IMR-90 (cell line): ENCODE measurements at regions of chr12 and their contacts with region 1.

Region 1: DNA sequence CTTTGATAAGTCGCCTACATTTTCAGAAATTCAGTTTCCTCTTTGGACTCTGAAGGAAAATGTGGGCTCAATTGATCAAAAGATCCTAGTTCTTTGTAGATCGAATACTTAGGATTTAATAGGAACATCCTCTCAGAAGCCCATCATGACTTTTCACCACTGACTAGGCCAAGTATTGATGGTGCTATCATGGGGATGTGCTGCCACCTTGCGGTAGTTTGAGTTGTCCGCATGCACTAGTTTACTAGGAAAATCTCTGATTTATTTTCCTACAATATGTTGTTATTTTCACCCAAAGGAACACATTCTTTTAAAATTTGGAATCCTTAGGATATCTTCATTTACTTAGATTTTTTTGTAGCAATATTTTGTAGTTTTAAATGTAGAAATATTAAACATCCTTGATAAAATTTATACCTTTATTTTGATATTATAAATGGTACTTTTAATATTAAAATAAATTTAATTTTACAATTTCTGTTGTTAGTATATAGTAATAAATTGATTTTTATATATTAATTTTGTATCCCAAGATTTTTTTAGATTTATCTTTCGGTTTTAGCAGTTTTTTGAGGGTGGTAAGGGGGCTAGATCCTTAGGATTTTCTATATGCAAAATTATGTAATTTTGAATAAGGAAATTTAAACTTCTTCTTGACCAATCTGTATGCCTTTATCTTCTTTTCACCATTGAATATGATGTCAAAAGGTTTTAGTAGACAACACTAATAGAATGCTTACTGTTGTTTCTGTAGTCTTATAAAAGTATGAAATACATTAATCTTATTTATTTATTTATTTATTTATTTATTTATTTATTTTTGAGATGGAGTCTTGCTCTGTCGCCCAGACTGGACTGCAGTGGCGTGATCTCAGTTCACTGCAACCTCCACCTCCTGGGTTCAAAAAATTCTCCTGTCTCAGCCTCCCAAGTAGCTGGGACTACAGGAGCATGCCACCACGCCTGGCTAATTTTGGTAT is 52.9 kb upstream of the OR9K2 start:
- DNase-seq: peak; percentile 70
- ATAC-seq: peak; percentile 79
- H3K4me3 ChIP-seq: no peak overlapping the region
- H3K27ac ChIP-seq: no peak overlapping the region
- H3K4me1 ChIP-seq: no peaks in the 10 kb centered on the region
- H3K27me3 ChIP-seq: no peaks in the 10 kb centered on the region
- CTCF ChIP-seq: peak; percentile 90
- POLR2A ChIP-seq: no peak
- RAD21 ChIP-seq: peak; percentile 81

Region 2: GRCh38 chr12:54338698-54339296 is 734.5 kb before region 1 on chr12:
- CTCF ChIA-PET with region 1: no interaction called
- POLR2A ChIA-PET with region 1: no interaction called
- dilution Hi-C with region 1: no loop called
- in situ Hi-C with region 1: no loop called
- intact Hi-C with region 1: no loop called
- DNase-seq: peak; percentile 56
- ATAC-seq: 0 out of 2 replicates have a peak, but pooled peaks have one; percentile 7
- H3K4me3 ChIP-seq: no peak overlapping the region
- H3K27ac ChIP-seq: peak overlapping the region; percentile 48; the same call in 1 of the 2 replicates
- H3K4me1 ChIP-seq: peaks cover 40% of the 10 kb centered on the region
- H3K27me3 ChIP-seq: no peaks in the 10 kb centered on the region
- CTCF ChIP-seq: no peak
- POLR2A ChIP-seq: no peak
- RAD21 ChIP-seq: no peak

Region 3: DNA sequence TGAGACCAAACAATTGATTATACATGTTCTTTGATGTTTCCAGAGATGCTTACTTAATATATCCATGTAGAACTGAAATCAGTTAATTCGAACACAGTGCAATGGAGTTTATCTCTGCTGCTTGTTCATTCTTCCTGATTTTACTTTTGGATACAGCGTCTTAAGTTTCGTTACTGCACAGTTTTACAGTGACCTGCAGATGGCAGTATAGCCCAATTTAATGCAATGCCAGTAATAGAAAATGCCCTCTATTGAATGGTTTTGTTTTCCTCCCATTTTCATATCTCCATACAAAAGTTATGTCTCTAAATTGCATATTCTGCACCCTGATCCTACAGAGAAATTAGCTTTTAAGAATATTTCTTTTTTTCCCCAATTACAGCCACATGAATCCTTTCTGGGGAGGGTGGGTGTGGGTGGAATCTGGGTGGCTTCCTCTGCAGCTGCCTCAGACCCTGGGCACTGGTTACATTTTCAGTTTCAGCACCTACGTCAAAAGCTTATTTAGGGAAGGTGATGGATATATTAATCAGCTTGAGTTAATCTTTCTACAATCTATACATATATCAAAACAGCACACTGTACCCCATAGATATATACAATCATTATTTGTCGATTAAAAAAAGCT is 324.0 kb before region 1 on chr12:
- CTCF ChIA-PET with region 1: interaction called, 8 read pairs
- POLR2A ChIA-PET with region 1: no interaction called
- dilution Hi-C with region 1: no loop called
- in situ Hi-C with region 1: loop called (anchors 25 kb)
- intact Hi-C with region 1: loop called (anchors 5 kb)
- DNase-seq: peak; percentile 47
- ATAC-seq: peak; percentile 80
- H3K4me3 ChIP-seq: no peak overlapping the region
- H3K27ac ChIP-seq: no peak overlapping the region
- H3K4me1 ChIP-seq: no peaks in the 10 kb centered on the region
- H3K27me3 ChIP-seq: no peaks in the 10 kb centered on the region
- CTCF ChIP-seq: peak; percentile 78
- POLR2A ChIP-seq: no peak
- RAD21 ChIP-seq: peak; percentile 70

Region 4: GRCh38 chr12:54759751-54760150 is 313.6 kb before region 1 on chr12:
- CTCF ChIA-PET with region 1: no interaction called
- POLR2A ChIA-PET with region 1: no interaction called
- dilution Hi-C with region 1: no loop called
- in situ Hi-C with region 1: loop called (anchors 25 kb)
- intact Hi-C with region 1: no loop called
- DNase-seq: peak; percentile 6
- ATAC-seq: no peak
- H3K4me3 ChIP-seq: no peak overlapping the region
- H3K27ac ChIP-seq: no peak overlapping the region
- H3K4me1 ChIP-seq: no peaks in the 10 kb centered on the region
- H3K27me3 ChIP-seq: no peaks in the 10 kb centered on the region
- CTCF ChIP-seq: peak; percentile 35
- POLR2A ChIP-seq: no peak
- RAD21 ChIP-seq: peak; percentile 40; the same call in 1 of the 2 replicates

Region 5: DNA sequence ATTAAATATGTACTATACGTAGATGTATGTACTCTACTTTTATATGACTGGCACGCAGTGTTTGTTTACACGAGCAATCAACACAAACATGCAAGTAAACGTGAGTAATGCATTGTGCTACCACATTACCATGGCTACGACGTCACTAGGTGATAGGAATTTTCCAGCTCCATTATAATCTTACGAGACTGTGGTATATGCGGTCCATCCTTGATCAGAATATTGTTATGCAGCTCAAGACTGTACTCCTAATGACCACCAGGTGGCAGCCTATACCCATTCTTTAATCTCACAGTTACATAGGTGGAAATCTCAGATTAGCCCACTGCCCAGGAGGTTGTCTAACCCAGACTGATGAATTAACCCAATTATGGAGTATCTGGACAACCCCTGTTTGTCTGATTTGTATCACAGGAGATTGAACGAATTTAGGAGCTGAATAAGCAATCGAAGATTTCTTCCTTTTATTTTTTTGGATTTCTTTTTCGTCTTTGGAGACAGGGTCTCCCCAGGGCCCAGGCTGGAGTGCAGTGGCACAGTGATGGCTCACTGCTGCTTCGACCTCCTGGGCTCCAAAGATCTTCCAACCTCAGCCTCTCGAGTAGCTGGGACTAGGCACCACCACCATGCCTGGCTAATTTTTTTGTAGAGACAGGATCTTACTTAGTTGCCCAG is 80.0 kb before region 1 on chr12:
- CTCF ChIA-PET with region 1: interaction called, 19 read pairs
- POLR2A ChIA-PET with region 1: no interaction called
- dilution Hi-C with region 1: no loop called
- in situ Hi-C with region 1: loop called (anchors 5 kb)
- intact Hi-C with region 1: loop called (anchors 1 kb)
- DNase-seq: peak; percentile 60
- ATAC-seq: peak; percentile 96
- H3K4me3 ChIP-seq: no peak overlapping the region
- H3K27ac ChIP-seq: no peak overlapping the region
- H3K4me1 ChIP-seq: no peaks in the 10 kb centered on the region
- H3K27me3 ChIP-seq: no peaks in the 10 kb centered on the region
- CTCF ChIP-seq: peak; percentile 76
- POLR2A ChIP-seq: no peak
- RAD21 ChIP-seq: peak; percentile 74